Activated CD4-positive, alpha-beta T cell treated with anti-CD3 and anti-CD28 coated beads for 36 hours (primary cell): ENCODE measurements at regions of chr1 and their contacts with region 1.

Region 1: DNA sequence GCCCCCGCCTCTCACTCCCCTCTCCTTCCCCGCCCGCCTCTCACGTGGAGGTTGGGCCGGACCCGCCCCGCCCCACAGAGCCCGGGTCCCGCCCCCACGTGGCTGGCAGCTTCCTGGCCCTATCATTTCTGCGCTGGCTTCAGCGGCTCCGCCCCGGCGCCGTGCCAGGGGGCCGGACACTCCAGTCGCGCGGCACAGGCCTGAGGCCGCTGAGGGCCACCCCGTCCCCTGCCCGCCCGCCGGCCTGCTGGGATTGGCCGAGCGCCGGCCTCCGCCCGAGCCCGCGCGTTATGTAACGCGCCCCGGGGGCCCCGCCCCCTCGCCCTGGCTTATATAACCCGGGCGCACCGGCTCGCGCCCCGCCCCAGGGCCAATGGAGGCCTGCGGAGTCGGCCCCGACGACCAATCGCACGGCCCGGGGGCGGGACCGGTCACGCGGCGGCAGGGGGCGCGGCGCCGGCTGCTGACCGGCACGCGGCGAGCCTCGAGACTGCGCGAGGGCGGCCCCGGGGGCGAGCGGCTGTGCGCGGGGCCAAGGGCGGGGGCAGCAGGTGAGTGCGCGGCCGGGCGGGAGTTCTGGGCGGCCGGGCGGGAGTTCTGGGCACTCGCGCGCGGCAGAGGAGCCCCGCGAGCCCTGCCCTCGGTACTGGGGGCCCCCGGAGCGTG is at the start of gene PER3:
- DNase-seq: peak; percentile 92
- ATAC-seq: peak; percentile 95
- H3K4me3 Mint-ChIP-seq: peak within 1 kb of the TSS; percentile 67
- H3K27ac Mint-ChIP-seq: no peak within 1 kb of the TSS
- H3K4me1 Mint-ChIP-seq: peaks cover 22% of the 10 kb centered on the region
- H3K27me3 Mint-ChIP-seq: no peaks in the 10 kb centered on the region
- total RNA-seq, gene PER3: 2.3 to 2.5 TPM

Region 2: GRCh38 chr1:7218210-7218832 is 565.6 kb before region 1 on chr1:
- CTCF ChIA-PET with region 1: no interaction called
- POLR2A ChIA-PET with region 1: no interaction called
- intact Hi-C with region 1: no loop called
- DNase-seq: peak; percentile 52
- ATAC-seq: no peak
- H3K4me3 Mint-ChIP-seq: no peak overlapping the region
- H3K27ac Mint-ChIP-seq: no peak overlapping the region
- H3K4me1 Mint-ChIP-seq: no peaks in the 10 kb centered on the region
- H3K27me3 Mint-ChIP-seq: peaks cover 21% of the 10 kb centered on the region

Region 3: DNA sequence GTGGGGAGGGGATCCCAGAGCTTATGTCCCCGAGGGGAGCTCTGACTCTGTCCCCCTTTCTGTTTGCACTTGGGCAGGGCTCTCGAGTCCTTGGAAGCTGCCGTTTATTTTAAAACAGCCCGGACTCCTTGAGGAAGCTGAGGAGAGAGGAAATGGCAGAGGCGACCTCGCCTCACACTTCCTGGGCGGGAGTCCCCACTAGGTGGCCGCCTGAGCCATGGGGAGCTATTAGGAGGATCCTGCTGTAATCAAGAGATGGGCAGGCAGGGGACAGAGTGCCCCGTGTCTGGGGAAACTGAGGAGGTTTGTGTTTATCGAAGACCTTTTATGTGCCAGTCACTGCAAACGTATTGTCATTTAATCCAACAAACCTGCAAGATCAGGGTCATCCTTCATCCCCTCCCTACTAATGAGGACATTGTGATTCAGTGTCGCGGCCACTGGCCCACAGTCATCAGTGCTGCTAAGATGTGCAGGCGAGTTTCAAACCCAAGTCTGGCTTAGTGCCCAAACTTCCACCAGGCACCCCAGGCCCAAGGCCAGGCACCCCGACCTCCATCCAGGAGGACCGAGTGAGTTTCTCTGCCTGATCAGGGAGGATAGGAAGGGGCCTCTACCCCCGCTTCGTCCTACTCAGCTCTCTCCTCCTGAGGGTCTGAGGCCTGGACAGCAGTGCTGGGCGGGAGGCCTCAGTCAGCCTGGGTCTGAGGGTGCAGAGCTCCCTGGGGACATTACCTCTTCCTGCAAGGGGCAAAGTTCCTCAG is 329.7 kb before region 1 on chr1:
- CTCF ChIA-PET with region 1: no interaction called
- POLR2A ChIA-PET with region 1: no interaction called
- intact Hi-C with region 1: no loop called
- DNase-seq: peak; percentile 31
- ATAC-seq: no peak
- H3K4me3 Mint-ChIP-seq: no peak overlapping the region
- H3K27ac Mint-ChIP-seq: no peak overlapping the region
- H3K4me1 Mint-ChIP-seq: no peaks in the 10 kb centered on the region
- H3K27me3 Mint-ChIP-seq: no peaks in the 10 kb centered on the region

Region 4: DNA sequence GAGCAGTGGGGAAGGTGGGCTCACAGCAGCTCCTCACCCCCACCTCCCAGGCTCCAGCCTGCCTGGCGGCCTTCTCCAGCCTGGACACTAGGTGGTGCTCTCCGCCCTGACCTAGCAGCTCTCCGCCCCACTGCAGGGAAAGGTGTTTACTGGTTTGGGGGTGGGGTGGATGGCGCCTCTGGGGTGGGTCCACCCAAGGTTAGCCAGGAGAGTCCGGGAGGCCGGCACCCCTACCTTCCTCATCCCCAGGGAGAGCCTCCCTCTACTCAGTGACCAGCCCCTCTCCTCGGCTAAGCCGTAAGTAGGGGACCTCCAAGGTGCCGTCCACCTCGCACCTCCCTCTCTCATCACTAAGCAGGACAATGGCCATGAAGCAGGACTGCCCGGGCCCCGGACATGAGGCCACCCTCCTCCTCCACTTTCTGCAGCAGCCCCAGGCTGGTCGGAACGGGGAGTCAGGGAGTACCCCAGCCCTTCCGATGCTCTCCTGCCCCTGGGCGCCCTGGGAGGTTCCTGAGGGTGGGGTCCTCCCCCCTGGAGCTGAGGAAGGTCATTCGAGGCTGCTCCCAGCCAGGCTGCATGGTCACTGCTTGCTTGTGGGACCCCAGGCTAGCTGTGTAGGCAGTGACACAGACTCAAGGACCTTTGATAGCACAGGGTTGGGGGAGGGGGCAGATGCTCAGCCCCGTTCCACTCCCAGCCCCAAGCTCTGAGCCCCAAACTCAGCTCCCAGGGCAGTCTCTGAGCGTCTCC is 114.2 kb before region 1 on chr1:
- CTCF ChIA-PET with region 1: no interaction called
- POLR2A ChIA-PET with region 1: no interaction called
- intact Hi-C with region 1: no loop called
- DNase-seq: peak; percentile 79
- ATAC-seq: peak; percentile 67
- H3K4me3 Mint-ChIP-seq: peak overlapping the region; percentile 30
- H3K27ac Mint-ChIP-seq: no peak overlapping the region
- H3K4me1 Mint-ChIP-seq: no peaks in the 10 kb centered on the region
- H3K27me3 Mint-ChIP-seq: peaks cover 3% of the 10 kb centered on the region

Region 5: GRCh38 chr1:7770997-7771822 is 12.7 kb before region 1 on chr1 and contains the start of gene VAMP3:
- CTCF ChIA-PET with region 1: no interaction called
- POLR2A ChIA-PET with region 1: no interaction called
- intact Hi-C with region 1: loop called (anchors 1 kb)
- DNase-seq: peak; percentile 94
- ATAC-seq: peak; percentile 90
- H3K4me3 Mint-ChIP-seq: peak within 1 kb of the TSS; percentile 80
- H3K27ac Mint-ChIP-seq: peak within 1 kb of the TSS; percentile 72
- H3K4me1 Mint-ChIP-seq: peaks cover 21% of the 10 kb centered on the region
- H3K27me3 Mint-ChIP-seq: peaks cover 6% of the 10 kb centered on the region
- total RNA-seq, gene VAMP3: 16.8 to 17.4 TPM